CD4-positive, alpha-beta memory T cell (primary cell): ENCODE measurements at regions of chr3 and their contacts with region 1.

Region 1: GRCh38 chr3:16884084-16884747 is 539 bp upstream of the PLCL2 start:
- DNase-seq: peak; percentile 58 to 71 (median 62)
- H3K4me3 ChIP-seq: peak overlapping the region in 1 of 2 donors; percentile 51
- H3K4me3 Mint-ChIP-seq: peak overlapping the region; percentile 92 to 98 (median 96)
- H3K27ac ChIP-seq: peak overlapping the region; percentile 87
- H3K27ac Mint-ChIP-seq: peak overlapping the region; percentile 95 to 97 (median 96)
- H3K4me1 ChIP-seq: peaks cover 32% of the 10 kb centered on the region
- H3K4me1 Mint-ChIP-seq: peaks cover 23 to 45% (median 30%) of the 10 kb centered on the region in 4 donors
- H3K27me3 ChIP-seq: no peaks in the 10 kb centered on the region
- H3K27me3 Mint-ChIP-seq: no peaks in the 10 kb centered on the region

Region 2: DNA sequence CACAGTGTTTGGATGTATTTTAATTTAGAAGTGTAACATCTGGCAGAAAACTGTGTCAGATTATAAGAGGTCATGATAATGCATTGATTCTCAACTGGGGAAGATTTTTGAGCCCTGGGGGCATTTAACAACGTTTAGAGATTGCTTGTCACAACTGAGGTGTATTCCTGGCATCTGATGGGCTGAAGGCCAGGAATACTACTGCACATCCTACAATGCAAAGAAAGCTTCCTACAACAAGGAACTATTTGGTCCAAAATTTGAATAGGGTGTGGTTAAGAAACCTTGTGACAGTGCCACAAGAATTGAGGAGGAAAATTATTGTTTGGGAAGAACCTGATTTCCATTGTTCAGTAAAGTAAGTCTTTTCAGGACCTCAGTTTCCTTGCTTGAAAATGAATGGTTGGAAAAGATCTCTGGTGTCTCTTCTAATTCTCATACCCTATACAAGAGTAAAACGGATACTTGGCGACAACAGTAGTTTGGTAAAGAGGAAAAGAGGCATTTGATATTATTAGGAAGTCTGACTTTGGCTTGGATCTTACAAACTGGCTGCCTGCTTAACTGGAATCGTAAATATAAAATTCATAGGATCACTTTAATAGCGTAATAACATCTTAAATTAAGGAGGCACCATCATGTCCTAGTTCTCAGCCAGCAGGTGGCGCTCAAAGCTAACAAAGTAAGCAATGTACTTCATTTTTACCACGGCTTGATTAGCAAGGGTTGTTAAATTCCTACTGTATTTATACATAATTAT is 283.3 kb before region 1 on chr3:
- CTCF ChIA-PET with region 1: no interaction called
- POLR2A ChIA-PET with region 1: interaction called, 4 read pairs
- intact Hi-C with region 1: loop called (anchors 2 kb)
- DNase-seq: peak; percentile 72 to 76 (median 72)
- H3K4me3 ChIP-seq: no peak overlapping the region
- H3K4me3 Mint-ChIP-seq: no peak overlapping the region
- H3K27ac ChIP-seq: no peak overlapping the region
- H3K27ac Mint-ChIP-seq: peak overlapping the region in 1 of 7 donors; percentile 36
- H3K4me1 ChIP-seq: peaks cover 10% of the 10 kb centered on the region
- H3K4me1 Mint-ChIP-seq: peaks cover 3 to 13% (median 8%) of the 10 kb centered on the region in 4 donors
- H3K27me3 ChIP-seq: no peaks in the 10 kb centered on the region
- H3K27me3 Mint-ChIP-seq: peaks cover 0 to 2% of the 10 kb centered on the region in 2 donors

Region 3: DNA sequence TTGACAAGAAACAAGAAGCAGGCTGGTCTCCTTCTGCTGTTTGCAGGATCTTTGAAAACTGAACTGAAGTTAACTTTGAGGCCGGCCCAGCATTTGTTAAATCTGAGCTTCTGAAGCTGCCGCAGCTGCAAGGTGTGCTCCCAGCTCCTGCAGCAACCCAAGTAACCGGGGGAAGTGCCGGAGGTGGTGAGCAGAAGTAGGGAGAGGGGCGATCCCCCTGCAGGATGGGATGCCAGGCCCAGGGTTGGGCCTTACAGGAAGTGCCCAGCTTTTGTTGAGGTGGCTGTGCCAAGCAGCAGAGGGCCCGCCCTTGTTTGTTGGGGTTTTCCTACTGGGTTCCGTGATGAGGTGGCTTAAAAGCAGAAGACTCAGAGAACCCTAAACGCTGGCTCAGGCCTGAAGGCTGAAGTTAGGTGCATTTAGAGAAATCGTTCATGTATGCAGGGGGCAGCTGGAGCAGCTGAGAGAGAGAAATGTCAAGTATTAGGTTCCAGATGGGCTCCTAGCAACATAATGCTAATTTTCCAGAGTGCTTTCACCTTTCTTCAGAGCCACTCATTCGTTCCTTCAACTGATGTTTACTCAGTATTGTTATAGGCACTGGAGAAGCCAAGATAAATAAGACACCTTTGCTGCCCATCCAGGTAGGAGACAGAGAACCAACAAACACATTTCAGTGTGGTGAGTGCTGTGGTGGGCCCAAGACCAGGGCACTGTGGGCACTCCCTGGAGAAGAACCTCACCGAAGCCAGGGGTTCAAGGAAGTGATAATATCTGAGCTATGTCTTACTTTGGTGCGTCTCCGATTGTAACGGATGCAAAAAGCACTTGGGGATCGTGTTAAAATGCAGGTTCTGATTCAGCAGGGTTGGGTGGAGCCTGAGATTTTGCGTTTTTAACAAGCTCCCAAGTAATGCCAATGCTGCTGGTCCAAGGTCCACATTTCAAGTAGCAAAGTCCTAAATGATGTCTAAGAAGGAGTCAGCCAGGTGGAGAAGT is 41.6 kb before region 1 on chr3:
- CTCF ChIA-PET with region 1: interaction called, 28 read pairs
- POLR2A ChIA-PET with region 1: interaction called, 180 read pairs
- intact Hi-C with region 1: loop called (anchors 1 kb)
- DNase-seq: peak; percentile 79 to 91 (median 81)
- H3K4me3 ChIP-seq: peak overlapping the region; percentile 36 to 54
- H3K4me3 Mint-ChIP-seq: peak overlapping the region; percentile 82 to 91 (median 87)
- H3K27ac ChIP-seq: peak overlapping the region; percentile 80
- H3K27ac Mint-ChIP-seq: peak overlapping the region; percentile 92 to 99 (median 98)
- H3K4me1 ChIP-seq: peaks cover 86% of the 10 kb centered on the region
- H3K4me1 Mint-ChIP-seq: peaks cover 54 to 90% (median 78%) of the 10 kb centered on the region in 4 donors
- H3K27me3 ChIP-seq: no peaks in the 10 kb centered on the region
- H3K27me3 Mint-ChIP-seq: no peaks in the 10 kb centered on the region

Region 4: GRCh38 chr3:16866571-16866970 is 17.6 kb before region 1 on chr3:
- CTCF ChIA-PET with region 1: interaction called, 16 read pairs
- POLR2A ChIA-PET with region 1: interaction called, 10 read pairs
- intact Hi-C with region 1: no loop called
- DNase-seq: peak in 3 of 5 donors; percentile 15 to 38 (median 32)
- H3K4me3 ChIP-seq: no peak overlapping the region
- H3K4me3 Mint-ChIP-seq: peak overlapping the region in 4 of 8 donors; percentile 14 to 54 (median 34)
- H3K27ac ChIP-seq: no peak overlapping the region
- H3K27ac Mint-ChIP-seq: peak overlapping the region in 1 of 7 donors; percentile 1
- H3K4me1 ChIP-seq: peaks cover 14% of the 10 kb centered on the region
- H3K4me1 Mint-ChIP-seq: peaks cover 11 to 14% (median 12%) of the 10 kb centered on the region in 4 donors
- H3K27me3 ChIP-seq: no peaks in the 10 kb centered on the region
- H3K27me3 Mint-ChIP-seq: peaks cover 0 to 2% of the 10 kb centered on the region in 2 donors

Region 5: GRCh38 chr3:16897254-16897926 is 13.2 kb after region 1 on chr3:
- CTCF ChIA-PET with region 1: interaction called, 7 read pairs
- POLR2A ChIA-PET with region 1: interaction called, 41 read pairs
- intact Hi-C with region 1: loop called (anchors 1 kb)
- DNase-seq: peak in 2 of 5 donors; percentile 20 to 45
- H3K4me3 ChIP-seq: no peak overlapping the region
- H3K4me3 Mint-ChIP-seq: peak overlapping the region in 7 of 8 donors; percentile 29 to 86 (median 59)
- H3K27ac ChIP-seq: no peak overlapping the region
- H3K27ac Mint-ChIP-seq: peak overlapping the region; percentile 32 to 88 (median 66)
- H3K4me1 ChIP-seq: peaks cover 94% of the 10 kb centered on the region
- H3K4me1 Mint-ChIP-seq: peaks cover 78 to 90% (median 85%) of the 10 kb centered on the region in 4 donors
- H3K27me3 ChIP-seq: no peaks in the 10 kb centered on the region
- H3K27me3 Mint-ChIP-seq: no peaks in the 10 kb centered on the region

Region 6: GRCh38 chr3:17023006-17023664 is 138.9 kb after region 1 on chr3:
- CTCF ChIA-PET with region 1: interaction called, 10 read pairs
- POLR2A ChIA-PET with region 1: interaction called, 3 read pairs
- intact Hi-C with region 1: no loop called
- DNase-seq: peak; percentile 14 to 81 (median 36)
- H3K4me3 ChIP-seq: no peak overlapping the region
- H3K4me3 Mint-ChIP-seq: peak overlapping the region in 7 of 8 donors; percentile 4 to 84 (median 19)
- H3K27ac ChIP-seq: no peak overlapping the region
- H3K27ac Mint-ChIP-seq: peak overlapping the region; percentile 73 to 92 (median 84)
- H3K4me1 ChIP-seq: peaks cover 22% of the 10 kb centered on the region
- H3K4me1 Mint-ChIP-seq: peaks cover 49 to 75% (median 63%) of the 10 kb centered on the region in 4 donors
- H3K27me3 ChIP-seq: no peaks in the 10 kb centered on the region
- H3K27me3 Mint-ChIP-seq: no peaks in the 10 kb centered on the region

Region 7: GRCh38 chr3:17151598-17152373 is 267.6 kb after region 1 on chr3:
- CTCF ChIA-PET with region 1: no interaction called
- POLR2A ChIA-PET with region 1: interaction called, 5 read pairs
- intact Hi-C with region 1: loop called (anchors 5 kb)
- DNase-seq: peak; percentile 76 to 90 (median 82)
- H3K4me3 ChIP-seq: peak overlapping the region; percentile 11 to 30
- H3K4me3 Mint-ChIP-seq: peak overlapping the region; percentile 29 to 71 (median 68)
- H3K27ac ChIP-seq: peak overlapping the region; percentile 55
- H3K27ac Mint-ChIP-seq: peak overlapping the region; percentile 83 to 92 (median 91)
- H3K4me1 ChIP-seq: peaks cover 33% of the 10 kb centered on the region
- H3K4me1 Mint-ChIP-seq: peaks cover 26 to 57% (median 34%) of the 10 kb centered on the region in 4 donors
- H3K27me3 ChIP-seq: no peaks in the 10 kb centered on the region
- H3K27me3 Mint-ChIP-seq: no peaks in the 10 kb centered on the region